RWPE1 (cell line): ENCODE measurements at regions of chr10 and their contacts with region 1.

Region 1: GRCh38 chr10:119250641-119251314 is 43.4 kb downstream of the GRK5 start:
- DNase-seq: peak; percentile 53
- H3K27ac ChIP-seq: no peak overlapping the region
- CTCF ChIP-seq: no peak

Region 2: DNA sequence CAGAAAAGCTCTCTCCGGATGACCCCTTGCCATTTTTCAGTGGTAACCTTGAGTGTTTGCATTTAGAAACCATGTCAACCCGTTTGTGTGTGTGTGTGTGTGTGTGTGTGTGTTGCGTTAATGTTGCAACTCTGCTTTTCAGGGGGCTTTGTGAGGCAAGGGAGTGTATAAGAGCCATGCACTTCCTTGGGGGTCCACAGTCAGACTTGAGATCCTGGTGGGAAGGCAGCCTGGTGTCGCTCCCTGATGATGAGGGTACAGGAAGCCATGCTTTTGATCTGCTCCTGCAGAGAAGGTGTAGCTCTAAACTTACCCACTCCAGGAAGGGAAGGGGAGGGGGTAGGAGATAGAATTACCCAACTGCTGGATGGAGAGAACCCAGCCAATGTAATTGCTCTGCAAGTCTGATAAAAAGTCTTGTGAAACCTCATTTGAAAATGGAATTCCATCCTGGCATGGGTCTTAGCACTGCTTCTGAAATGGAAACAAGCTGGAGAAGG is 32.7 kb before region 1 on chr10:
- CTCF ChIA-PET with region 1: no interaction called
- POLR2A ChIA-PET with region 1: no interaction called
- DNase-seq: no peak
- H3K27ac ChIP-seq: no peak overlapping the region
- CTCF ChIP-seq: no peak

Region 3: DNA sequence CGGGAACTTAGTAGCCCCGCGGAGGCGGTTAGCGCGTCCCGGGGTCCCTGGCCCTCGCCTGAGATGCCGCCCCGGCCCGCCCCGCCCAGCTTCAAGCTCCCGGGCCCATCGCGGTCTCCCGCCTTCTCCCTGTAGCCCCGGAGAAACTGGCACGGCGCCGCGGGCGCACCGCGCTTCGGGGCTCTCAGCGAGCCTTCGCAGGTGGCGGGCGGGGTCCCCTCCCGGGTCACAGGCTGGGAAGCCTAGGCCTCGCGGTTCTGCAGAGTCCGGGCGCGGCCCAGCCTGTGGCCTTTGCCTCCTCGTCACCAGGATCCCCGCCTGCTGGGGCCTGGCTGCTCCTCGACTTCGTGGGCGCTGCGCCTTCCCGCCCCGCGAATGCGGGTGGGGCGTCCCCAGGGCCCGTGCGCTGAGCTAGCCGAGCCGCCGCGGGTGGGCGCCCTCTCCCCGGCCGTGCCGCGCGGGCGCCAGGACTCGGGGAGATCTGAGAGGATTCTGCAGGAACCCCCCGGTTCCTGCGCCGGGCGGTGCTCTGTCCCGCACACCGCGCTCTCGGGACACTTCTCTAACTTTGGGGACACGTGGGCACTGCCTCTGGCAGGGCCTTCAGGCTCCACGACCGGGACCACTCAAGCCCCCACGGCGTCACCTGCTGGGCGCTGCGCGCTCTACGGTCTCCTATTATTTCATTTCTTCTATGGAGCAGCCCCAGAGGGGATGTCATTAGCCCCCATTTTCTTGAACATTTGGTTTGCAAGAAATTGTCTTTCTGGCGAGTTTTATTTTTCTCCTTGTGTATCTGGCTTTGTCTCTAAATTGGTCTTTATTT is 292.4 kb after region 1 on chr10:
- CTCF ChIA-PET with region 1: interaction called, 10 read pairs
- POLR2A ChIA-PET with region 1: no interaction called
- DNase-seq: peak; percentile 61
- H3K27ac ChIP-seq: peak overlapping the region; percentile 84
- CTCF ChIP-seq: peak; percentile 84

Region 4: GRCh38 chr10:120365872-120366271 is 1115.1 kb after region 1 on chr10:
- CTCF ChIA-PET with region 1: no interaction called
- POLR2A ChIA-PET with region 1: no interaction called
- DNase-seq: peak; percentile 28
- H3K27ac ChIP-seq: no peak overlapping the region
- CTCF ChIP-seq: no peak